ENCODE measurements at regions of chr13 and their contacts with region 1.

Region 1: GRCh38 chr13:69704311-69704710 is 403.3 kb upstream of the ATXN8OS start:
- DNase-seq: no peak
- ATAC-seq: no peak
- H3K4me3 ChIP-seq: no peak overlapping the region
- H3K27ac ChIP-seq: no peak overlapping the region
- H3K4me1 ChIP-seq: no peaks in the 10 kb centered on the region
- H3K27me3 ChIP-seq: no peaks in the 10 kb centered on the region
- CTCF ChIP-seq: no peak
- EP300 ChIP-seq: no peak
- POLR2A ChIP-seq: no peak
- RAD21 ChIP-seq: no peak

Region 2: DNA sequence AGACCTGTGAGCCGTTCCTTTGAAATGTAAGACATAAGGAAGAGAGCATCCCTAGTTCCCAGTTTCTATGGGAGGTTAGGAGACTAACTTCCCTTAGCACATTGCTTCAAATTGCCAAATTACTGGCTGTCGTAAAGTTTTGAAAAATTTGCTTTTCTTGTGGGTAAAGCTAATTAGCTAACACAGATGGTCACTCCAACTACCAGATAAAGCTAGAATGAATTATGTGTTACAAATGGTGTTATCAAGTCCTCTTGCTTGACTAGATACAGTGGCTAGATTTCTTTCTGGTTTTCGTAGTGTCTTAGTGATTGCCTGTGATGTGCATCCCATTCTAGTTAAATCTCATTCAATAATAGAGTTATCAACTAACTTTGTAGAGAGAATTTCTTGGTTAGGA is 13.3 kb before region 1 on chr13:
- CTCF ChIA-PET with region 1: interaction called, 3 read pairs
- POLR2A ChIA-PET with region 1: no interaction called
- RAD21 ChIA-PET with region 1: interaction called, 5 read pairs
- SMC1A ChIA-PET with region 1: interaction called, 16 read pairs
- in situ Hi-C with region 1: no loop called
- intact Hi-C with region 1: no loop called
- DNase-seq: no peak
- ATAC-seq: no peak
- H3K4me3 ChIP-seq: no peak overlapping the region
- H3K27ac ChIP-seq: no peak overlapping the region
- H3K4me1 ChIP-seq: no peaks in the 10 kb centered on the region
- H3K27me3 ChIP-seq: no peaks in the 10 kb centered on the region
- CTCF ChIP-seq: no peak
- EP300 ChIP-seq: no peak
- POLR2A ChIP-seq: no peak
- RAD21 ChIP-seq: no peak